CD4-positive, alpha-beta T cell (primary cell): ENCODE measurements at regions of chr6 and their contacts with region 1.

Region 1: GRCh38 chr6:118565311-118565960 is 17.3 kb downstream of the PLN start:
- DNase-seq: peak in 5 of 14 experiments; percentile 22 to 81 (median 75)
- ATAC-seq: peak; percentile 97
- H3K4me3 ChIP-seq: no peak overlapping the region
- H3K4me3 Mint-ChIP-seq: no peak overlapping the region
- H3K27ac ChIP-seq: peak overlapping the region in 1 of 2 donors; percentile 5
- H3K27ac Mint-ChIP-seq: peak overlapping the region; percentile 72
- H3K4me1 ChIP-seq: peaks cover 7% of the 10 kb centered on the region
- H3K4me1 Mint-ChIP-seq: peaks cover 43% of the 10 kb centered on the region
- H3K27me3 ChIP-seq: no peaks in the 10 kb centered on the region
- H3K27me3 Mint-ChIP-seq: no peaks in the 10 kb centered on the region
- CTCF ChIP-seq: peak; percentile 63

Region 2: DNA sequence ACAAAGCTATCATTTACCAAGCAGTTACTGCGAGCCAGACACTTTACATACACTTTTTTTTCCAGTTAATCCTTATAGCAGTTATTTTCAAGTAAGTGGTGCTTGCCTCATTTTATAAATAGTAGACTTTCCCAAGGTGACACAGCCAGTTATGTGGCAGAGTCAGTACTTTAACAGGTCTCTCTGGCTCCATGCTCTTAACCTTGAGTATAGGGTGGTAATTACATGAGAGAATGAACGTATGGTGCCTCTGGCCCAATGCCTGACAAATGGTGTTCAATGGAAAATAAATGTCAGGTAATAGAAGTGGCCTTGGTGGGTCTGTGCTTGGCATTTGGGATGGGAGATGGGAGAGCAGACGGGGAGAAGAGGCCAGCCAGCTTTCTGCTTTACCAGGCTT is 342.1 kb before region 1 on chr6:
- CTCF ChIA-PET with region 1: no interaction called
- POLR2A ChIA-PET with region 1: no interaction called
- intact Hi-C with region 1: no loop called
- DNase-seq: no peak
- ATAC-seq: no peak
- H3K4me3 ChIP-seq: no peak overlapping the region
- H3K4me3 Mint-ChIP-seq: no peak overlapping the region
- H3K27ac ChIP-seq: no peak overlapping the region
- H3K27ac Mint-ChIP-seq: no peak overlapping the region
- H3K4me1 ChIP-seq: no peaks in the 10 kb centered on the region
- H3K4me1 Mint-ChIP-seq: no peaks in the 10 kb centered on the region
- H3K27me3 ChIP-seq: peaks cover 0 to 7% of the 10 kb centered on the region in 2 experiments
- H3K27me3 Mint-ChIP-seq: peaks cover 17% of the 10 kb centered on the region
- CTCF ChIP-seq: no peak

Region 3: DNA sequence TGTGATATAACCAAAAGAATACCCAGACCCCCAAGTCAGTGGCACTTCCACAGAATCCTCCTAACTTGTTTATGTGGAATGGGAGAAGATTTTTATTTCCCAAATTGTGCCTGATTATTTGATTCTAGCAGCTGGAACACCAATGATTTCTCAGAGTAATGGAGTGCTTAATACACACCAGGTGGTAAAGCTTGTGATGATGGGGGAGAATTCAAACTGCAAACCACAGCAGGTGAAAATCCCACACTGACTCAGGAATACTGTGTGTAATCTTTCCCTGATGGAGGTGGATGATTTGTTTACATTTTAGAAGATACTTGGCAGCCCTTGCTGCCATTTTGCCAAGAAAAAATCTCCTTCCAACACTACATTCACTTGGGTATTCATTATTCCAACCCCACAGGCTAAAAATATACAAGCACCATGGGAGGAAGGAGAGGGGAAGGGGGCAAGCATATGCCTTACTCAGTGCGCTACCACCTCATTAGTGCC is 230.1 kb before region 1 on chr6:
- CTCF ChIA-PET with region 1: no interaction called
- POLR2A ChIA-PET with region 1: no interaction called
- intact Hi-C with region 1: no loop called
- DNase-seq: no peak
- ATAC-seq: no peak
- H3K4me3 ChIP-seq: no peak overlapping the region
- H3K4me3 Mint-ChIP-seq: no peak overlapping the region
- H3K27ac ChIP-seq: no peak overlapping the region
- H3K27ac Mint-ChIP-seq: no peak overlapping the region
- H3K4me1 ChIP-seq: no peaks in the 10 kb centered on the region
- H3K4me1 Mint-ChIP-seq: no peaks in the 10 kb centered on the region
- H3K27me3 ChIP-seq: no peaks in the 10 kb centered on the region
- H3K27me3 Mint-ChIP-seq: no peaks in the 10 kb centered on the region
- CTCF ChIP-seq: no peak

Region 4: GRCh38 chr6:118618679-118619377 is 53.4 kb after region 1 on chr6:
- CTCF ChIA-PET with region 1: no interaction called
- POLR2A ChIA-PET with region 1: no interaction called
- intact Hi-C with region 1: loop called (anchors 1 to 5 kb)
- DNase-seq: peak; percentile 38 to 78 (median 64)
- ATAC-seq: peak; percentile 97
- H3K4me3 ChIP-seq: no peak overlapping the region
- H3K4me3 Mint-ChIP-seq: peak overlapping the region; percentile 9
- H3K27ac ChIP-seq: no peak overlapping the region
- H3K27ac Mint-ChIP-seq: peak overlapping the region; percentile 62
- H3K4me1 ChIP-seq: peaks cover 28% of the 10 kb centered on the region
- H3K4me1 Mint-ChIP-seq: peaks cover 86% of the 10 kb centered on the region
- H3K27me3 ChIP-seq: no peaks in the 10 kb centered on the region
- H3K27me3 Mint-ChIP-seq: no peaks in the 10 kb centered on the region
- CTCF ChIP-seq: peak; percentile 76

Region 5: GRCh38 chr6:118724211-118724610 is 158.8 kb after region 1 on chr6:
- CTCF ChIA-PET with region 1: interaction called, 10 read pairs
- POLR2A ChIA-PET with region 1: no interaction called
- intact Hi-C with region 1: no loop called
- DNase-seq: peak in 1 of 14 experiments; percentile 23
- ATAC-seq: peak; percentile 55
- H3K4me3 ChIP-seq: no peak overlapping the region
- H3K4me3 Mint-ChIP-seq: peak overlapping the region; percentile 77
- H3K27ac ChIP-seq: no peak overlapping the region
- H3K27ac Mint-ChIP-seq: peak overlapping the region; percentile 75
- H3K4me1 ChIP-seq: peaks cover 27% of the 10 kb centered on the region
- H3K4me1 Mint-ChIP-seq: peaks cover 77% of the 10 kb centered on the region
- H3K27me3 ChIP-seq: no peaks in the 10 kb centered on the region
- H3K27me3 Mint-ChIP-seq: no peaks in the 10 kb centered on the region
- CTCF ChIP-seq: no peak

Region 6: DNA sequence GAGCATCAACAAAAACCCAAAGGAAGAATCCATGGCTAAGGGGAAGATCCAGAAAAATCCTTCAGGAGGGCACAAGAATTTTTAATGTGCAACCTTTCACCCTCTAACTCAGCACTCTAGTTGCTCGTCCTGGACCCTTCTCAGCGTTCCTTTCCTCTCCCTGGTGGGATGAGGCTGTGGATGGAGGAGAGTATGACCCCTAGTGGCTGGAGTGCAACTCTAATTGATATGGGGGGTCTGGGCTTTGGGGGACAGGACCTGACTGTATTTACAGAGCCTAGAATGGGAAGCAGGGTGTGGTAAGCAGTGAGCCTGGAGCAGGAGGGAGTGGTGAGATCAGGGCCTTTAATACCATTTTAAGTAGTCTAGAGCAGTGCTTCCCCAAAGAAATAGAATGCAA is 169.9 kb after region 1 on chr6:
- CTCF ChIA-PET with region 1: no interaction called
- POLR2A ChIA-PET with region 1: no interaction called
- intact Hi-C with region 1: loop called (anchors 2 to 10 kb)
- DNase-seq: peak in 4 of 14 experiments; percentile 31 to 48 (median 32)
- ATAC-seq: peak; percentile 34
- H3K4me3 ChIP-seq: no peak overlapping the region
- H3K4me3 Mint-ChIP-seq: no peak overlapping the region
- H3K27ac ChIP-seq: no peak overlapping the region
- H3K27ac Mint-ChIP-seq: no peak overlapping the region
- H3K4me1 ChIP-seq: peaks cover 7% of the 10 kb centered on the region
- H3K4me1 Mint-ChIP-seq: peaks cover 24% of the 10 kb centered on the region
- H3K27me3 ChIP-seq: no peaks in the 10 kb centered on the region
- H3K27me3 Mint-ChIP-seq: no peaks in the 10 kb centered on the region
- CTCF ChIP-seq: peak; percentile 48